PC-9 (cell line): ENCODE measurements at regions of chr11 and their contacts with region 1.

Region 1: DNA sequence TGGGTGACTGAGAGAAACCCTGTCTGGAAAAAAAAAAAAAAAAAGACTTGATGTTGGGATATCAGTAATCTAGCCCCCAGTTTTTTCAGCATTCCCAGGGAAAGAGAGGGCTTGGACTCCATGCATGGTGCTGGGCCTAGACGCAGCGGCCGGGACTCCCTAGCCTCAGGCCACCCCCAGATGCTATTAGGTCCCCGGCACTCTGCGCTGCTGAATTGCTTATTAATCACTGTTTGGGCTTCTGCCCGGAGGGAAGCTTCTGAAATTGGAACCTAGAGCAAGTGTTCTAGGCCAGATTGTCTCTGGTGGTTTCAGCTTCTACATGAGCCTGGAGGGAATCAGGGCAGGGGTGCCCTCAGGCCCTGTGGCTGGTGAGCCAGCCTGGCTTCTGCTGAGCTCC is 39.0 kb downstream of the SLCO2B1 start:
- DNase-seq: no peak
- H3K4me3 ChIP-seq: no peak overlapping the region
- H3K27ac ChIP-seq: no peak overlapping the region
- H3K4me1 ChIP-seq: no peaks in the 10 kb centered on the region
- H3K27me3 ChIP-seq: peaks cover 85% of the 10 kb centered on the region
- CTCF ChIP-seq: no peak

Region 2: GRCh38 chr11:75063732-75064314 is 126.1 kb before region 1 on chr11:
- CTCF ChIA-PET with region 1: no interaction called
- POLR2A ChIA-PET with region 1: no interaction called
- intact Hi-C with region 1: no loop called
- DNase-seq: no peak
- H3K4me3 ChIP-seq: no peak overlapping the region
- H3K27ac ChIP-seq: no peak overlapping the region
- H3K4me1 ChIP-seq: no peaks in the 10 kb centered on the region
- H3K27me3 ChIP-seq: no peaks in the 10 kb centered on the region
- CTCF ChIP-seq: no peak

Region 3: GRCh38 chr11:75968021-75968625 is 778.2 kb after region 1 on chr11:
- CTCF ChIA-PET with region 1: interaction called, 16 read pairs
- POLR2A ChIA-PET with region 1: no interaction called
- intact Hi-C with region 1: no loop called
- DNase-seq: no peak
- H3K4me3 ChIP-seq: no peak overlapping the region
- H3K27ac ChIP-seq: no peak overlapping the region
- H3K4me1 ChIP-seq: peaks cover 12% of the 10 kb centered on the region
- H3K27me3 ChIP-seq: no peaks in the 10 kb centered on the region
- CTCF ChIP-seq: no peak